ENCODE measurements at regions of chr9 and their contacts with region 1.

Region 1: GRCh38 chr9:100352727-100353505 is at the start of gene TEX10:
- DNase-seq: peak; percentile 89
- H3K4me3 ChIP-seq: peak within 1 kb of the TSS; percentile 99
- H3K27ac ChIP-seq: peak within 1 kb of the TSS; percentile 87
- H3K4me1 ChIP-seq: peaks cover 39% of the 10 kb centered on the region
- H3K27me3 ChIP-seq: no peaks in the 10 kb centered on the region
- CTCF ChIP-seq: no peak
- total RNA-seq, gene TEX10: 7.7 TPM

Region 2: GRCh38 chr9:100229561-100229960 is 123.4 kb before region 1 on chr9:
- intact Hi-C with region 1: no loop called
- DNase-seq: no peak
- H3K4me3 ChIP-seq: no peak overlapping the region
- H3K27ac ChIP-seq: no peak overlapping the region
- H3K4me1 ChIP-seq: no peaks in the 10 kb centered on the region
- H3K27me3 ChIP-seq: no peaks in the 10 kb centered on the region
- CTCF ChIP-seq: no peak

Region 3: GRCh38 chr9:100437860-100438805 is 85.2 kb after region 1 on chr9:
- intact Hi-C with region 1: loop called (anchors 10 kb)
- DNase-seq: peak; percentile 43
- H3K4me3 ChIP-seq: no peak overlapping the region
- H3K27ac ChIP-seq: no peak overlapping the region
- H3K4me1 ChIP-seq: peaks cover 5% of the 10 kb centered on the region
- H3K27me3 ChIP-seq: no peaks in the 10 kb centered on the region
- CTCF ChIP-seq: peak; percentile 95

Measured in left ventricle myocardium inferior (tissue), 1 donor.